B cell (primary cell): ENCODE measurements at regions of chr5 and their contacts with region 1.

Region 1: DNA sequence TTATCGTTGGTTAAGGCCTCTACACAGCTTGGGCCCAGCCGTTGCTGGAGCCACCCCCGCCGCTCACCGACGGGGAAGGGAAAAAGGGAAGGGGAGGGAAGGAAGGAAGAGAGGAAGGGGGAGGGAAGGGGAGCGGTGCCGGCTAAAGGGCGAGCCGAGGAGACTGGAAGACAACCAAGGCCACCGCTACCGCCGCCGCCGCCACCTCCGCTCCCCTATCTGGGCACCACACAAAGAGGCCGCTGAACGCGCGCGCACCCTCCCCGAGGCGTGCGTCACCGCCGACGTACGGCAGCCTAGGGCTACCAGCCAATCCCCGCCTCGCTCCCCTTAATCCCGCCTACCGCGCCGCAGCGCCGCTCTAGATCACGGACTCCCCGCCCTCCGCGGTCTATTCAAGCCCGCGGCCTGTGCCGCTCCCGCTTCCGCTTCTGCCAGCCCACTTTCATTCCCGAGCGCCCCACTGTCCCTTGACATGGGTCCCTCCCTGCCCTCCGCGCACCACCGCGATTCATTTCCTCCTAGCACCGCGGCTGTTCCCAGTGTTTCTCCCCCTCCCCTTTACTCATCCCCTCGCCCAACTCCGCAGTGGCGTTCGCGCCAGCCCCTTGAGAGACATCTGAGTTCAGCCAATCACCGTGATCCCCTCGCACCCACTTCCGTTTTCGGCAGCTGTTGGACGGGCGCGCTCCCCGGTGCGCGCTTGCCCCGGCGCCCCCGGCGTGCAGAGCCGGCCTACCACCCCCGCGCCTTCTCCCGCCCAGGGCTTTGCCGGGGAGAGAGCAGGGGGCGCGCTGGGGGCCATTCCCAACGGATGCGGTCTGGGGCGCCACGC is at the start of gene HNRNPA0:
- DNase-seq: peak; percentile 99
- ATAC-seq: peak; percentile 82
- H3K4me3 ChIP-seq: peak within 1 kb of the TSS; percentile 69 to 95 (median 87)
- H3K4me3 Mint-ChIP-seq: peak within 1 kb of the TSS; percentile 97
- H3K27ac ChIP-seq: peak within 1 kb of the TSS; percentile 98 to 100
- H3K27ac Mint-ChIP-seq: peak within 1 kb of the TSS; percentile 100
- H3K4me1 ChIP-seq: peaks cover 27 to 28% of the 10 kb centered on the region in 2 donors
- H3K4me1 Mint-ChIP-seq: peaks cover 32% of the 10 kb centered on the region
- H3K27me3 ChIP-seq: no peaks in the 10 kb centered on the region
- H3K27me3 Mint-ChIP-seq: no peaks in the 10 kb centered on the region
- CTCF ChIP-seq: no peak
- total RNA-seq, gene HNRNPA0: 29.6 and 31.5 TPM in 2 replicates

Region 2: GRCh38 chr5:137888857-137889759 is 134.8 kb after region 1 on chr5 and contains the start of gene PKD2L2:
- CTCF ChIA-PET with region 1: no interaction called
- POLR2A ChIA-PET with region 1: interaction called, 7 read pairs
- intact Hi-C with region 1: loop called (anchors 2 kb)
- DNase-seq: peak; percentile 92
- ATAC-seq: peak; percentile 99
- H3K4me3 ChIP-seq: peak within 1 kb of the TSS; percentile 39 to 81 (median 77)
- H3K4me3 Mint-ChIP-seq: peak within 1 kb of the TSS; percentile 90
- H3K27ac ChIP-seq: peak within 1 kb of the TSS; percentile 93 to 95
- H3K27ac Mint-ChIP-seq: peak within 1 kb of the TSS; percentile 97
- H3K4me1 ChIP-seq: peaks cover 20 to 22% of the 10 kb centered on the region in 2 donors
- H3K4me1 Mint-ChIP-seq: peaks cover 36% of the 10 kb centered on the region
- H3K27me3 ChIP-seq: no peaks in the 10 kb centered on the region
- H3K27me3 Mint-ChIP-seq: no peaks in the 10 kb centered on the region
- CTCF ChIP-seq: no peak
- total RNA-seq, gene PKD2L2: 0.37 and 0.63 TPM in 2 replicates

Region 3: DNA sequence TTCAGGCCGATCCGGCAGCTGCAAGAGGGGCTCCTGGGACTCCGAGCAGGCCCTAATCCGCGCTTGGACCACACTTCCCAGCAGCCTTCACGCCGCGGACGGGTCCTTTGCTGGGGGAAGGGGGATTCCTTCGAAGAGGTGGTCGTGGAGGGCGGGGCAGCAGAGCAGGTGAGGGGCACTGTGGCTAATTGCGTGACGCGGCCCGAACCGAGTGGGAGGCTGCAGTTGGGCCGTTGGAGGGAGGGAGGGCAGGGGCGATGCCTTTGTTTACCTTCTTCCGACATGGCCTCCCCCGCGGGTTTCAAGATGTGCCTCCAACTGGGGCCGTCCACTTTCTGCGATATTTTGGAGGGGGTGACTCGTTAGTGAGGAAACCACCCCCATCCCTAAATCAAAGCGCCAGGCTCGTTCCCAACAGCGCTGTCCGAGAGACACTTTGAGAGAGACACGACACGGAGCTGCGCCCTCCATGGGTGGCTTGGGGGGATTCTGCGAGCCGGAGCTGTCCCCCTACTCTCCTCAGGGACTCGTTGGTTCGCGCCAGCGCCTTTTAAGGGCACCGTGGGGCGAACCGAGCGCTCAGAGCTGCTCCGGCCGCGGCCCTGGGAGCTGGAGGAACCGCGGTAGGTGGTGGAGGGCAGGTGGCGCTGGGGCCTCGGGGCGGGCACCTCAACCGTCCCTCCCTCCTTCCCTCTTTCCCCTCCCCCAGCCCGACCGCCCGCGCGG is 583.5 kb after region 1 on chr5 and contains the start of gene FAM53C:
- CTCF ChIA-PET with region 1: no interaction called
- POLR2A ChIA-PET with region 1: interaction called, 4 read pairs
- intact Hi-C with region 1: loop called (anchors 5 kb)
- DNase-seq: peak; percentile 99
- ATAC-seq: peak; percentile 82
- H3K4me3 ChIP-seq: peak within 1 kb of the TSS; percentile 55 to 90 (median 67)
- H3K4me3 Mint-ChIP-seq: peak within 1 kb of the TSS; percentile 92
- H3K27ac ChIP-seq: peak within 1 kb of the TSS; percentile 96 to 99
- H3K27ac Mint-ChIP-seq: peak within 1 kb of the TSS; percentile 100
- H3K4me1 ChIP-seq: peaks cover 22 to 25% of the 10 kb centered on the region in 2 donors
- H3K4me1 Mint-ChIP-seq: peaks cover 35% of the 10 kb centered on the region
- H3K27me3 ChIP-seq: no peaks in the 10 kb centered on the region
- H3K27me3 Mint-ChIP-seq: no peaks in the 10 kb centered on the region
- CTCF ChIP-seq: no peak
- total RNA-seq, gene FAM53C: 29.3 and 29.8 TPM in 2 replicates

Region 4: DNA sequence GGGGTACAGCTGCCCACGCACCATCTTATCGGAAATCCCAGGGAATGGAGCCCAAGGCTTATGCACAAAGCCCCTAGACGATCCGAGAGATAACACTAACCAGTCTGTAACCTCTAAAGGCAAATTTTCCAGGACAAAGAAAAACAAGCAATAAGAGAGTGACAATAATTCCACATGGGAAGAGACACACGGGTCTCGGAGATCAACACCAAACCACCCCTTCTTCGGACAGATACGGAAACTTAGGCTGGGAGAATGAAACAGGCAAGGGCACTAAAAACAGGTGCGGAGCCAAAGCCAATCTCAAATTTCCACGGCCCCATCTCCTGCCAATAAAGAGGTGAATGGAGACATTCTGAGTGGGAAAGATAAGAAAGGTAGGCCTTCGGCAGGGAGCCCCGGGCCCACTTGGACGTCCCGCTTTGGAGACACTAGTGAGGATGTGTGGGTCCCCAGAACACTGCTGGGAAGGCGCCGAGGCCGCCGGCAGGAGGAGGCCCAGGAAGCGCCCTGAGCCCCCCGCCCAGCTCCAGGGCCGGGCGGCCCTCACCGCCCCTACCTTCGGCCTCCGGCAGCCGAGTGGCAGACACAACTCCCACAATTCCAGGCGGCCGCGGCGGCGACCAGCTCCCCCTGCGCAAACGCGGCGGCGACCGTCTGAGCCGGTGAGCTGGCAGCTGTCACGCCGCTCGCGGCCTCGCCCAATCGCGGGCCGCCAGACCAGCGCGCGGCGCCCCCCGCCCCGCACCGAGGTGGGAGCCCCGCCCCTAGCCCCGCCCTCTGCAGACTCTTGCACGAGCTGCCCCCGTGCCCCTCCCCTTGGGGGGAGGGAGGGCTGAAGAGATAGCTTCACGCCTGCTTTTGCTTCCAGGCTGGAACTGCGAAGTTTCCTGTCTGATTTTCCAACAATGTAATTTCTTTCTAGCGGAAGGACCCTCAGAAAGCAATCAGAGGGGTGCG is 1443.6 kb after region 1 on chr5 and contains the start of gene SIL1:
- CTCF ChIA-PET with region 1: no interaction called
- POLR2A ChIA-PET with region 1: no interaction called
- intact Hi-C with region 1: loop called (anchors 10 kb)
- DNase-seq: peak; percentile 96
- ATAC-seq: peak; percentile 98
- H3K4me3 ChIP-seq: peak within 1 kb of the TSS; percentile 56 to 90 (median 71)
- H3K4me3 Mint-ChIP-seq: peak within 1 kb of the TSS; percentile 88
- H3K27ac ChIP-seq: peak within 1 kb of the TSS; percentile 81 to 96
- H3K27ac Mint-ChIP-seq: peak within 1 kb of the TSS; percentile 87
- H3K4me1 ChIP-seq: peaks cover 17 to 21% of the 10 kb centered on the region in 2 donors
- H3K4me1 Mint-ChIP-seq: peaks cover 19% of the 10 kb centered on the region
- H3K27me3 ChIP-seq: no peaks in the 10 kb centered on the region
- H3K27me3 Mint-ChIP-seq: no peaks in the 10 kb centered on the region
- CTCF ChIP-seq: no peak
- total RNA-seq, gene SIL1: 17.9 and 19.8 TPM in 2 replicates